ENCODE measurements at regions of chr1 and their contacts with region 1.

Region 1: DNA sequence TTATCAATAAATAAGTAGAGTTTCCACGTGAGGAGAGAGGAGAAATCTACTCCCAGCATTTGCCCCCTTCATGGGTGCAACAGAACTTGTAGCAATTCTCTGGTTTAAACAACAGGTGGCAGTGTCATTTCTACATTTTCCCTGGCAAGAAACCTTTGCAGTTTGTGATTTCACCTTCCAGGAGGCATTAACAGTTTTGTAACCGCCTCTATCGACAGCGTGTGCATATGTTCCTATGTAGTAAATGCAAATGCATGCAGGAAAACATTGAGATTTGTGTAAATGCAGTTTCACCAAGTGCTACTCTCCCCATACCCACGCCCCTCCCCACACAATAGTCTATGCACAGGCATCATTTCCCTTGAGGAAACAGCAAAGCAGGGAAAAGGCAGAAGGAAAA is 494.7 kb downstream of the SMYD3 start:
- DNase-seq: peak in 3 of 35 experiments; percentile 0 to 35 (median 4)
- ATAC-seq: no peak
- H3K4me3 ChIP-seq: no peak overlapping the region
- H3K4me3 Mint-ChIP-seq: no peak overlapping the region
- H3K27ac ChIP-seq: no peak overlapping the region
- H3K27ac Mint-ChIP-seq: no peak overlapping the region
- H3K4me1 ChIP-seq: no peaks in the 10 kb centered on the region
- H3K4me1 Mint-ChIP-seq: no peaks in the 10 kb centered on the region
- H3K27me3 ChIP-seq: no peaks in the 10 kb centered on the region
- H3K27me3 Mint-ChIP-seq: no peaks in the 10 kb centered on the region

Region 2: DNA sequence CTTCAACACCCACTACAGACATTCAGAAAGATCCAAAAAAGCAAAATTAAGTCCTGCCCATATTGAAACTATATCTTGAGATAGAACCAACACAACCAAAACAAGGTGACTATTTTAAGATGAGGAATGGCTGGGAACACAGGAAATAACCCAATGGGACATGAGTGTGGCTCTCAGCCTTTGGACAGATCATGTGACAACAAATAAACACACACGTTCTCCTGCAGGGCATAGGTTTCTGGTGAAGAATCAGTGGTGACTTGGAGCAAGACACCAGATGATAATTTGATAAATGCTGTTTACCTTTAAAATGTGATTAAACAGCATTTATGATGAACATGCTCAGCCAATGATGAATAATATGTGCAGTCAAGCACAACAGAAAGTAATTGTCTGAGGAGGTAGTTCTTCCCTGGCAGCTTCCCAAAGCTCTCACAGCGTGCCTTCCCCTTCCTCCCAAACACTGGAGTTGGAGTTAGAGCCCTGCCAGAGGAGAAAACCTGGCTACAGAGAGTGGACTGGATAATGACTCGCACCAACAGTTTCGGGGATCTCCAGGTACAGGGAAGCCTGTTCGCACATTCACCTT is 31.1 kb after region 1 on chr1:
- CTCF ChIA-PET with region 1: no interaction called
- POLR2A ChIA-PET with region 1: no interaction called
- DNase-seq: no peak
- ATAC-seq: no peak
- H3K4me3 ChIP-seq: no peak overlapping the region
- H3K4me3 Mint-ChIP-seq: no peak overlapping the region
- H3K27ac ChIP-seq: no peak overlapping the region
- H3K27ac Mint-ChIP-seq: no peak overlapping the region
- H3K4me1 ChIP-seq: no peaks in the 10 kb centered on the region
- H3K4me1 Mint-ChIP-seq: no peaks in the 10 kb centered on the region
- H3K27me3 ChIP-seq: no peaks in the 10 kb centered on the region
- H3K27me3 Mint-ChIP-seq: no peaks in the 10 kb centered on the region

Region 3: GRCh38 chr1:246317341-246318035 is 305.1 kb after region 1 on chr1:
- CTCF ChIA-PET with region 1: no interaction called
- POLR2A ChIA-PET with region 1: interaction called in 1 of 2 experiments, 15 read pairs
- DNase-seq: no peak
- ATAC-seq: no peak
- H3K4me3 ChIP-seq: no peak overlapping the region
- H3K4me3 Mint-ChIP-seq: no peak overlapping the region
- H3K27ac ChIP-seq: no peak overlapping the region
- H3K27ac Mint-ChIP-seq: no peak overlapping the region
- H3K4me1 ChIP-seq: no peaks in the 10 kb centered on the region
- H3K4me1 Mint-ChIP-seq: peaks cover 0 to 2% (median 0%) of the 10 kb centered on the region in 3 donors
- H3K27me3 ChIP-seq: no peaks in the 10 kb centered on the region
- H3K27me3 Mint-ChIP-seq: no peaks in the 10 kb centered on the region